Right cardiac atrium (tissue), 5 donors: ENCODE measurements at regions of chr12 and their contacts with region 1.

Region 1: GRCh38 chr12:112382232-112382796 is at the start of gene HECTD4:
- DNase-seq: peak; percentile 98 to 100 (median 99)
- ATAC-seq: peak; percentile 99
- H3K4me3 ChIP-seq: peak within 1 kb of the TSS; percentile 91
- H3K27ac ChIP-seq: peak within 1 kb of the TSS; percentile 79
- H3K4me1 ChIP-seq: peaks cover 5% of the 10 kb centered on the region
- H3K27me3 ChIP-seq: no peaks in the 10 kb centered on the region
- total RNA-seq, gene HECTD4: 24.2 to 26.6 (median 25.7) TPM

Region 2: GRCh38 chr12:112198120-112198733 is 184.1 kb before region 1 on chr12:
- intact Hi-C with region 1: loop called in 2 of 4 experiments (anchors 10 kb)
- DNase-seq: peak; percentile 39 to 72 (median 68)
- ATAC-seq: peak; percentile 68 to 75
- H3K4me3 ChIP-seq: no peak overlapping the region
- H3K27ac ChIP-seq: no peak overlapping the region
- H3K4me1 ChIP-seq: no peaks in the 10 kb centered on the region
- H3K27me3 ChIP-seq: no peaks in the 10 kb centered on the region

Region 3: GRCh38 chr12:112283546-112283945 is 98.8 kb before region 1 on chr12:
- intact Hi-C with region 1: loop called in 2 of 4 experiments (anchors 5 to 10 kb)
- DNase-seq: no peak
- ATAC-seq: peak in 1 of 2 donors; percentile 41
- H3K4me3 ChIP-seq: no peak overlapping the region
- H3K27ac ChIP-seq: no peak overlapping the region
- H3K4me1 ChIP-seq: peaks cover 6% of the 10 kb centered on the region
- H3K27me3 ChIP-seq: no peaks in the 10 kb centered on the region